ENCODE measurements at regions of chr12 and their contacts with region 1.

Region 1: GRCh38 chr12:49322708-49323523 is at the start of gene TROAP:
- DNase-seq: peak; percentile 99
- ATAC-seq: peak; percentile 98
- H3K4me3 ChIP-seq: peak within 1 kb of the TSS; percentile 74
- H3K27ac ChIP-seq: peak within 1 kb of the TSS; percentile 85
- H3K4me1 ChIP-seq: peaks cover 5 to 16% of the 10 kb centered on the region in 2 experiments; a peak in 3 of 5 replicates
- H3K27me3 ChIP-seq: no peaks in the 10 kb centered on the region
- CTCF ChIP-seq: no peak
- EP300 ChIP-seq: no peak
- POLR2A ChIP-seq: peak; percentile 93
- RAD21 ChIP-seq: no peak; a peak in 1 of 4 replicates
- polyA plus RNA-seq, gene TROAP: 52.1 to 53.7 TPM

Region 2: GRCh38 chr12:49296034-49296835 is 26.7 kb before region 1 on chr12:
- CTCF ChIA-PET with region 1: no interaction called
- POLR2A ChIA-PET with region 1: interaction called, 14 read pairs
- in situ Hi-C with region 1: no loop called
- intact Hi-C with region 1: no loop called
- DNase-seq: peak; percentile 79 to 94 (median 90)
- ATAC-seq: peak; percentile 89
- H3K4me3 ChIP-seq: peak overlapping the region; percentile 43
- H3K27ac ChIP-seq: no peak overlapping the region
- H3K4me1 ChIP-seq: peaks cover 11 to 56% of the 10 kb centered on the region in 2 experiments; a peak in 4 of 5 replicates
- H3K27me3 ChIP-seq: no peaks in the 10 kb centered on the region
- CTCF ChIP-seq: peak; percentile 81 to 92 (median 87)
- EP300 ChIP-seq: no peak
- POLR2A ChIP-seq: no peak
- RAD21 ChIP-seq: peak in 1 of 2 experiments; percentile 49; a peak in 2 of 4 replicates

Region 3: GRCh38 chr12:49304161-49304560 is 18.8 kb before region 1 on chr12:
- CTCF ChIA-PET with region 1: no interaction called
- POLR2A ChIA-PET with region 1: interaction called, 21 read pairs
- in situ Hi-C with region 1: no loop called
- intact Hi-C with region 1: no loop called
- DNase-seq: peak in 1 of 4 experiments; percentile 6
- ATAC-seq: peak; percentile 48; the same call in 2 of the 3 replicates
- H3K4me3 ChIP-seq: no peak overlapping the region
- H3K27ac ChIP-seq: no peak overlapping the region
- H3K4me1 ChIP-seq: peaks cover 13 to 23% of the 10 kb centered on the region in 2 experiments; a peak in 4 of 5 replicates
- H3K27me3 ChIP-seq: no peaks in the 10 kb centered on the region
- CTCF ChIP-seq: 0 out of 6 replicates have a peak, but pooled peaks of 1 of the 3 experiments have one; percentile 6
- EP300 ChIP-seq: no peak
- POLR2A ChIP-seq: no peak
- RAD21 ChIP-seq: no peak

Region 4: GRCh38 chr12:49336645-49337584 is 14.0 kb after region 1 on chr12 and contains the start of gene C1QL4:
- CTCF ChIA-PET with region 1: no interaction called
- POLR2A ChIA-PET with region 1: interaction called, 32 read pairs
- in situ Hi-C with region 1: no loop called
- intact Hi-C with region 1: no loop called
- DNase-seq: peak; percentile 93 to 96 (median 96)
- ATAC-seq: peak; percentile 91
- H3K4me3 ChIP-seq: peak within 1 kb of the TSS; percentile 54
- H3K27ac ChIP-seq: peak within 1 kb of the TSS; percentile 50; the same call in 2 of the 3 replicates
- H3K4me1 ChIP-seq: peaks cover 11 to 39% of the 10 kb centered on the region in 2 experiments
- H3K27me3 ChIP-seq: no peaks in the 10 kb centered on the region
- CTCF ChIP-seq: peak; percentile 72 to 97 (median 87)
- EP300 ChIP-seq: no peak
- POLR2A ChIP-seq: 0 out of 2 replicates have a peak, but pooled peaks have one; percentile 33
- RAD21 ChIP-seq: peak in 1 of 2 experiments; percentile 58; a peak in 2 of 4 replicates
- polyA plus RNA-seq, gene C1QL4: 0.08 to 0.10 TPM

Region 5: GRCh38 chr12:49451468-49452259 is 128.7 kb after region 1 on chr12:
- CTCF ChIA-PET with region 1: no interaction called
- POLR2A ChIA-PET with region 1: no interaction called
- in situ Hi-C with region 1: no loop called
- intact Hi-C with region 1: no loop called
- DNase-seq: no peak
- ATAC-seq: no peak
- H3K4me3 ChIP-seq: no peak overlapping the region
- H3K27ac ChIP-seq: no peak overlapping the region
- H3K4me1 ChIP-seq: peaks cover 0 to 3% of the 10 kb centered on the region in 2 experiments; a peak in 1 of 5 replicates
- H3K27me3 ChIP-seq: no peaks in the 10 kb centered on the region
- CTCF ChIP-seq: no peak
- EP300 ChIP-seq: no peak
- POLR2A ChIP-seq: no peak
- RAD21 ChIP-seq: no peak